Gastrocnemius medialis (tissue), 4 donors: ENCODE measurements at regions of chr20 and their contacts with region 1.

Region 1: GRCh38 chr20:58236612-58237330 is 8.3 kb upstream of the ANKRD60 start:
- DNase-seq: peak; percentile 32 to 46
- ATAC-seq: peak; percentile 66 to 84
- H3K4me3 ChIP-seq: peak overlapping the region; percentile 38 to 60 (median 50)
- H3K27ac ChIP-seq: no peak overlapping the region
- H3K4me1 ChIP-seq: no peaks in the 10 kb centered on the region
- H3K27me3 ChIP-seq: no peaks in the 10 kb centered on the region
- CTCF ChIP-seq: peak; percentile 84 to 98 (median 92)
- POLR2A ChIP-seq: no peak

Region 2: GRCh38 chr20:58017237-58017969 is 219.4 kb before region 1 on chr20:
- in situ Hi-C with region 1: no loop called
- intact Hi-C with region 1: no loop called
- DNase-seq: no peak
- ATAC-seq: peak in 1 of 2 donors; percentile 36
- H3K4me3 ChIP-seq: no peak overlapping the region
- H3K27ac ChIP-seq: no peak overlapping the region
- H3K4me1 ChIP-seq: peaks cover 15 to 28% of the 10 kb centered on the region in 2 donors
- H3K27me3 ChIP-seq: no peaks in the 10 kb centered on the region
- CTCF ChIP-seq: no peak
- POLR2A ChIP-seq: no peak

Region 3: GRCh38 chr20:58447511-58448391 is 211.0 kb after region 1 on chr20:
- in situ Hi-C with region 1: loop called (anchors 10 kb)
- intact Hi-C with region 1: loop called (anchors 1 kb)
- DNase-seq: peak; percentile 14 to 53
- ATAC-seq: peak; percentile 56 to 86
- H3K4me3 ChIP-seq: no peak overlapping the region
- H3K27ac ChIP-seq: no peak overlapping the region
- H3K4me1 ChIP-seq: no peaks in the 10 kb centered on the region
- H3K27me3 ChIP-seq: no peaks in the 10 kb centered on the region
- CTCF ChIP-seq: peak; percentile 49 to 72 (median 58)
- POLR2A ChIP-seq: no peak

Region 4: DNA sequence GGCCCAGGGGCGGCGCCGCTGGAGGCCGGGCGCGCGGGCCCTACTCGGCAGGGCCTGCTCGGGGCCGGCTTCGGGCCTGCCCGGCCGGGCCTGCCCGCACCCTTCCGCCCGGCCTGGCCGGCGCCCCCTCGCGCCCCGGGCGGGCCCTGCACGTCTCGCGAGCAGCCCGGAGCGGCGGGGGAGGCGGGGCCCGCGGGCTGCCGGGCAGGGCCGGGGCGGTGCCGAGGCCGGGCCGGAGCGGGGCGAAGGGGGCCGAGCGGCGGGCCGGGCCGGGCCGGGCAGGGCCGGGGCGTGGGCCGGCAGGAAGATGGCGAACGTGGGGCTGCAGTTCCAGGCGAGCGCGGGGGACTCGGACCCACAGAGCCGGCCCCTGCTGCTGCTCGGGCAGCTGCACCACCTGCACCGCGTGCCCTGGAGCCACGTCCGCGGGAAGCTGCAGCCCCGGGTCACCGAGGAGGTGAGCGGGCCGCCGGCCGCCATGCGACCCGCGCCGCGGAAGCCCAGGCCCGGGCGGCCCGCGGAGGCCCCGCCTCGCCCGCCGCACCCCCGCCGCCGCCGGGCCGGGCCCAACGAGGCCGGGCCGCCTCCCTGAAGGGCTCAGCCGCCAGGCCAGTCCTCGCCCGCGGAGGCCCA is 455.9 kb after region 1 on chr20 and contains the start of gene NPEPL1:
- in situ Hi-C with region 1: loop called in 2 of 4 experiments (anchors 25 kb)
- intact Hi-C with region 1: loop called (anchors 1 kb)
- DNase-seq: peak in 1 of 2 donors; percentile 58
- ATAC-seq: peak; percentile 80 to 81
- H3K4me3 ChIP-seq: peak within 1 kb of the TSS; percentile 51 to 66 (median 58)
- H3K27ac ChIP-seq: peak within 1 kb of the TSS; percentile 81 to 90 (median 86)
- H3K4me1 ChIP-seq: peaks cover 32 to 38% of the 10 kb centered on the region in 2 donors
- H3K27me3 ChIP-seq: no peaks in the 10 kb centered on the region
- CTCF ChIP-seq: peak in 4 of 5 experiments; percentile 35 to 61 (median 45)
- POLR2A ChIP-seq: peak in 1 of 2 donors; percentile 38
- total RNA-seq, gene NPEPL1: 18.1 to 51.5 (median 34.3) TPM

Region 5: DNA sequence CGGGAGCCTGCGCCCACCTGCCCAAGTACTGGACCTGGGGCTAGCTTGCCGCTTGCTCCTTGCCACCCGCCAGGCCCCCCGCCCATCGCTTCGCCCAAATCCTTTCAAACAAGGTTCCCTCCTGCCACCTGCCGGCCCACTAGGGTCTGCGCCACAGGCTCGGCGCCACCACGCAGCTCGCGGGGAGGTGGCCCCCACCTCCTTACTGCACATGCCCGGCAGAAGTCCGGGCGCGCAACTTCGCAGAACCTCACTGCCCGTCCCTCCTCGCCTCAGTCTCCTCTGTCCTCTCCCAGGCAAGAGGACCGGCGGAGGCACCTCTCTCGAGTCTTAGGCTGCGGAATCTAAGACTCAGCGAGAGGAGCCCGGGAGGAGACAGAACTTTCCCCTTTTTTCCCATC is 602.7 kb after region 1 on chr20:
- in situ Hi-C with region 1: loop called in 1 of 4 experiments (anchors 25 kb)
- intact Hi-C with region 1: no loop called
- DNase-seq: no peak
- ATAC-seq: no peak
- H3K4me3 ChIP-seq: peak overlapping the region in 3 of 4 donors; percentile 32 to 41 (median 38)
- H3K27ac ChIP-seq: no peak overlapping the region
- H3K4me1 ChIP-seq: peaks cover 0 to 3% of the 10 kb centered on the region in 2 donors
- H3K27me3 ChIP-seq: peaks cover 17 to 27% (median 22%) of the 10 kb centered on the region in 3 donors
- CTCF ChIP-seq: peak in 4 of 5 experiments; percentile 14 to 50 (median 37)
- POLR2A ChIP-seq: no peak